Activated T-helper 1 cell treated with anti-CD3 and anti-CD28 coated beads, Interleukin-12 subunit alpha, Interleukin-12 subunit beta, Interleukin-2, Interleukin-4 antibody, amounts not matched to agents 30 ng/mL and 10 ng/mL and 1 ng/mL, durations not matched to agents 14 hours and 24 hours and 36 hours (primary cell): ENCODE measurements at regions of chr1 and their contacts with region 1.

Region 1: DNA sequence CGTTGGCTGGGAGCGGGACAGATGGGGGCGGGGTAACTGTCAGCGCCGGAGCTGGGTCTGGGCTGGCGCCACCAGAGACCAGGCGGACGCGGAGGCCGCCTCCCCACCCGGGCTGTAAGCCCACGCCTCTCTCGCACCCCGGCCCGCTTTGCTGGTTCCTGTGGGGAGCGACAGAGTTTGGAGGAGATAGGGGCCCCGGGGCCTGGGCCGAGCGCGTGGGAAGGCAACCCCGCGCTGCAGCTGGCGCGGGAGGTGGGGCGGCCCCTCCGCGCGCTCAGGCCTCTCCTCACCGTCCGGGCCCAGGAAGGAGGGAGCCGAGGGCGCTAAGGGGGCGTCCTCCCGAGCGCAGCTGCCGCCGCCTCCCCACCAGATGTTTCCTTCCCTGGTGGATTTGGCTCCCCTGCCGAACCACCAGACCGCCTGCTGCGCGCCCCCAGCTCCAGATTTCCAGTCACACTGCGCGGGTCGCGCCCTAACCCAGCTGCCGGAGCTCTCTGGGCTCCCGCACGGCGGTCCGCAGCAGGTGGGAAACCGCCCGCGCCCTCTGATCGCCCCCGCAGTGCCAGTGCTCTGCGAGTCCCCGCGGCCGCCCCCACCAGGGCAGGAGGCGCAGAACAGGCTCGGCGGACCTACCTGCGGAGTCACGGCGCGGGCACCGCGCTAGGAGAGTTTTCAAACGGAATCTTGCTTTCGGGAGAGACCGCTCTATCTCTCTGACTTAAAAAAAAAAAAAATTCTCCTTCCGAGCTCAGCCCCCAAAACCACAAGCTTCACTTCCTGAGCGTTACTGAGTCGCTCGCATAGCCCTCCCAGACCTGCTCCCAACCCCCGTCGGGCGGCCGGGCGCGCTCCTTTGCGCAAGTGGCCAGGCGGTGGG is 1.1 kb downstream of the GFI1 start:
- DNase-seq: peak; percentile 81
- H3K4me3 Mint-ChIP-seq: peak overlapping the region; percentile 99
- H3K27ac Mint-ChIP-seq: peak overlapping the region; percentile 98
- H3K4me1 Mint-ChIP-seq: peaks cover 41% of the 10 kb centered on the region
- H3K27me3 Mint-ChIP-seq: peaks cover 3% of the 10 kb centered on the region

Region 2: GRCh38 chr1:91500756-91501522 is 984.7 kb before region 1 on chr1 and contains the start of gene CDC7:
- intact Hi-C with region 1: loop called (anchors 10 kb)
- DNase-seq: peak; percentile 81
- H3K4me3 Mint-ChIP-seq: no peak within 1 kb of the TSS
- H3K27ac Mint-ChIP-seq: no peak within 1 kb of the TSS
- H3K4me1 Mint-ChIP-seq: peaks cover 34% of the 10 kb centered on the region
- H3K27me3 Mint-ChIP-seq: no peaks in the 10 kb centered on the region
- total RNA-seq, gene CDC7: 19.9 and 23.1 TPM in 2 replicates

Region 3: GRCh38 chr1:92298573-92299476 is 186.8 kb before region 1 on chr1 and contains the starts of genes GLMN and RPAP2:
- intact Hi-C with region 1: loop called (anchors 1 kb)
- DNase-seq: peak; percentile 74
- H3K4me3 Mint-ChIP-seq: peak within 1 kb of the TSS; percentile 97
- H3K27ac Mint-ChIP-seq: peak within 1 kb of the TSS; percentile 99
- H3K4me1 Mint-ChIP-seq: peaks cover 40% of the 10 kb centered on the region
- H3K27me3 Mint-ChIP-seq: no peaks in the 10 kb centered on the region
- total RNA-seq, gene GLMN: 29.2 and 29.7 TPM in 2 replicates
- total RNA-seq, gene RPAP2: 42.0 and 44.8 TPM in 2 replicates

Region 4: DNA sequence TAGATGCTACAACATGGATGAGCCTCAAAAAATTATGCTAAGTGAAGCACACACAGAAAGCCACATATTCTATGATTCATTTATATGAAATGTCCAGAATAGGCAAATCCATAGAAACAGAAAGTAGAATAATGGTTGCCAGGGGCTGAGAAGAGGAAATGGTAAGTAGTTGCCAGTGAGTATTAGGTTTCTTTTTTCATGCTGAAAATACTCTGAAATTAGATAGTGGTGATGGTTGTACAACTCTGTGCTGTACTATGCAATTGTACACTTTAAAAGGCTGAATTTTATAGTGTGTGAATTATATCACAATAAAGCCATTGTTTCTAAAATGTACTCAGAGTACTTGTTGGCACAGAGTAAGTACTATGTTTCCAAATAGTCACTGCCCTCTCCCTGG is 16.6 kb after region 1 on chr1:
- intact Hi-C with region 1: loop called (anchors 1 kb)
- DNase-seq: no peak
- H3K4me3 Mint-ChIP-seq: no peak overlapping the region
- H3K27ac Mint-ChIP-seq: no peak overlapping the region
- H3K4me1 Mint-ChIP-seq: peaks cover 50% of the 10 kb centered on the region
- H3K27me3 Mint-ChIP-seq: no peaks in the 10 kb centered on the region

Region 5: DNA sequence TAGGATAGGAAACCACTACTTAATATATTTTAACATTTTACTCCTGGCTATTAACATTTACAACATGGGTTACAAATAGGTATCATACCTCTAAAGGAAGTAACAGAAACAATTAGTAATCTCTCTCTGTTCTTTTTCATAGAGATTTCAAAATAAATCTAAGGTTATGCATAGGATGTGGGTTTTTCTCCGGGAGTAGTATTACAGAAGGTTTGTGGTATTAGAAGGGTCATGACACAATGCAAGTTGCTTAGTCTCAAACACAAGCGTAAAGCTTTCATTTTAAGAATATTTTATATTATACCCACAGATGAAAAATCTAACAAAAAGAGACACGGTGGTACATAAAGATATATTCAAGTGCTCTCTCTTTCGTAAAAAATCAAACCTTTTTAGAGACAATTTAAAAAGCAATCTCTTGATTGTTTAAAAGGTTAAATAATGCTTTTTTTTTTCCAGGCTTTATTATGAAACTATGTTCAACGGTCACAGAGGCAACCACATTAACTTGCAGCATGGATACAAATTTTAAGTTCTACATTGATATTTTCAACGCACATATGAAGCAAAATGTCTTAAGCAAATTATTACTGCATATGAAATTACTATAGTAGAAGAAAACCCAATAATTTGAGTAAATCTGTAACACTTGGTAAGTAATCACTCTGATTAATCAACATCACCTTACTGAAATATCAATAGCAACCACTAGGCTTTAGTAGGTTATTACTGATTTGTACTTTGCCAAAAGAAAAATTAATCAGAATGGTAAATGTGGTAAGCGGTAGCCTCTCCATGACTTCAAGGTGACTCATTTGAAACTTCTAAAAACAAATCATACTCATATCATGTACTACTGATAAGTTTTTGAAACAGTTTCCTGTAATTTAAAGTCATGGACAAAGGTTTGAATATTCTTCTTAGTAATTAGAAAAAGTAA is 98.5 kb after region 1 on chr1:
- intact Hi-C with region 1: loop called (anchors 1 kb)
- DNase-seq: no peak
- H3K4me3 Mint-ChIP-seq: peak overlapping the region; percentile 62
- H3K27ac Mint-ChIP-seq: peak overlapping the region; percentile 91
- H3K4me1 Mint-ChIP-seq: peaks cover 75% of the 10 kb centered on the region
- H3K27me3 Mint-ChIP-seq: no peaks in the 10 kb centered on the region

Region 6: DNA sequence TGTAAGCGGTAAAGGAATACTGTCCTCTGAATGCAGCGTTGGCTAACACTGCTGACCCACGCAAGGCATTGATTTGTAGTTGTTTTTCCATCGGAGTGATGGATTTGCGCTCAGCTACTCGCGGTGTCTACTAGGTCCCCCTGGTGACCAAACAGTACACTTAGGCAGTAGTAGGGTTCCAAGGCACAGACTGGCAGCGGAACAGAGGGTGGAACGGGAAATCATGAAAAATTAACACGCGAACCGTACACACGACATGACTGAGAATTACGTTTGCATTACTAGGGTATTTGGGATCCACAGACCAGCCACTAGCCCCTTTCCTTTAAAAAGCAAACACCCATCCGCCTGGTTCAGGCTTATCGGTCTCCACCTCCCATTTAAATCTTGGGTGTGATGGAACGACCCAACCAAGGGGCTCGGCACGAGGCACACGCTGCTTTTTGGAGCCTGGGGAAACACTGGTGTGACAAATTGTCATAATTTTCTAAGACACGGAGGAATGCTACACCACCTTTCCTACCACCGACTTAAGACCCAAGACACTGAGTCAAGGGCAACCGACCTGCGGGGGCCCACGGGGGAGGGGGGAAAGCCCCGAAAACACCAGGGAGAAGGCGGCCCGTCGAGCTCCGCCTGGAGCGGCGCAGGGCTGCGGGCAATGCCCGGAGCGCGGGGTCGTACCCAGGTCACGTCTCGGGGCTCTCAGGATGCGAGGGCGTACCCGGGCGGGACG is 474.9 kb after region 1 on chr1:
- intact Hi-C with region 1: loop called (anchors 5 kb)
- DNase-seq: peak; percentile 53
- H3K4me3 Mint-ChIP-seq: peak overlapping the region; percentile 90
- H3K27ac Mint-ChIP-seq: peak overlapping the region; percentile 97
- H3K4me1 Mint-ChIP-seq: peaks cover 41% of the 10 kb centered on the region
- H3K27me3 Mint-ChIP-seq: no peaks in the 10 kb centered on the region

Region 7: DNA sequence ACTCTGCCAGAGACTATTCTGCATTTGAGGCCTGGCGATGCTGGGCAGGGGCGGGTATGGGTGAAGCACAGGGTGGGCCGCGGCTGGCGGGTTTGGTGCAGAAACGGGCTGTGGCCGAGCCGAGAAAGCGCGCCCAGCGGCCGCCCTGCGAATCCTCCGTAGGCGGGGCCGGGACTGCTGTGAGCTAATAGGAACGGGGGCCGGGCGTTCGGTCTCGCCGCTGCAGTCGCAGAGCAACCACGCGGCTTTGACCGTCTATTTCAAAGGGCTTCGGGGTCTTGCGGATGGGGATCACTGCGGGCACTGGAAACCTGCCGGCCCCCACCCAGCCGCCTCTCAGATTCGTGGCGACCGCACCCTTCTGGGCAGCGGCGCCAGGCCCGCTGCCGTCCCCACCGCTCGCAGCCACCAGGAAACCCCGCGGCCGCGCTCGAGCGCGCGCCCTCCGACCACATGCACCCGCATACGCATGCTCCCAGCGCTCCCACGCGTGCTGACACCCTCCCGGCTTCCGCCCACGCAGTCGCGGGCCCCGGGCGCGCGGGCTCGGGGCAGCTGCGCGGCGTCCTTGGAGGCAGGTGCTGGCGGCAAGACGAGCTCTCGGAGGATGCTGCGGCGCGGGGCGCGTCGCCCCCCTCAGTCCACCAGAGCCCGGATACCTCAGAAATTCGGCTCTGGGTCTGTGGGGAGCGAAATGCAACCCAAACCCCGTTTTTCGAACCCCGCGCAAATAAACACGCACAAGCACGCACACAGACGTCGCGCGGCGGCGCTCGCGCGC is 1360.8 kb after region 1 on chr1:
- intact Hi-C with region 1: loop called (anchors 10 kb)
- DNase-seq: peak; percentile 80
- H3K4me3 Mint-ChIP-seq: peak overlapping the region; percentile 85
- H3K27ac Mint-ChIP-seq: peak overlapping the region; percentile 90
- H3K4me1 Mint-ChIP-seq: peaks cover 30% of the 10 kb centered on the region
- H3K27me3 Mint-ChIP-seq: peaks cover 2% of the 10 kb centered on the region